Activated T-helper 1 cell treated with anti-CD3 and anti-CD28 coated beads, Interleukin-12 subunit alpha, Interleukin-12 subunit beta, Interleukin-2, Interleukin-4 antibody, amounts not matched to agents 30 ng/mL and 10 ng/mL and 1 ng/mL, durations not matched to agents 14 hours and 24 hours and 36 hours (primary cell): ENCODE measurements at regions of chr3 and their contacts with region 1.

Region 1: DNA sequence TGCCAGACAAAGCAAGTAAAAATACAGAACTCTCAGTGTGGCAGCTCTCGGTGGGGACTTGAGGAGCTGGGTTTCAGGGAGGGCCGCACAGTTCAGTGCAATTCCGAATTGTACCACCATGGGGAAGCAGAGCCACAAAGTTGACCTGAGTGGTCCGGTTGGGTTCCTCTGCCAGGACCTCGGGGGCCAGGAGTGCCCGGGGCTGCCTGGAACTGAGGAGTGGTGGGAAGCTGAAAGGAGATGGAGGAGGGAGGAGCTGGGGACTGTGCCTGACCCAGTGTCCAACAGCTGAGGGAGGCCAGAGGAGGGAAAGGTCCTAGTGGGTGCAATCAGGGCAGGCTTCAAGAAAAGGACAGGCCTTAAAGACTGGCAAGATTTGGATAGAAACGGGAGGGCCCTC is 32.2 kb upstream of the TRH start:
- DNase-seq: peak; percentile 6
- H3K4me3 Mint-ChIP-seq: no peak overlapping the region
- H3K27ac Mint-ChIP-seq: no peak overlapping the region
- H3K4me1 Mint-ChIP-seq: no peaks in the 10 kb centered on the region
- H3K27me3 Mint-ChIP-seq: peaks cover 2% of the 10 kb centered on the region

Region 2: GRCh38 chr3:130014526-130014925 is 72.2 kb after region 1 on chr3:
- intact Hi-C with region 1: loop called (anchors 10 kb)
- DNase-seq: no peak
- H3K4me3 Mint-ChIP-seq: no peak overlapping the region
- H3K27ac Mint-ChIP-seq: no peak overlapping the region
- H3K4me1 Mint-ChIP-seq: no peaks in the 10 kb centered on the region
- H3K27me3 Mint-ChIP-seq: peaks cover 6% of the 10 kb centered on the region

Region 3: DNA sequence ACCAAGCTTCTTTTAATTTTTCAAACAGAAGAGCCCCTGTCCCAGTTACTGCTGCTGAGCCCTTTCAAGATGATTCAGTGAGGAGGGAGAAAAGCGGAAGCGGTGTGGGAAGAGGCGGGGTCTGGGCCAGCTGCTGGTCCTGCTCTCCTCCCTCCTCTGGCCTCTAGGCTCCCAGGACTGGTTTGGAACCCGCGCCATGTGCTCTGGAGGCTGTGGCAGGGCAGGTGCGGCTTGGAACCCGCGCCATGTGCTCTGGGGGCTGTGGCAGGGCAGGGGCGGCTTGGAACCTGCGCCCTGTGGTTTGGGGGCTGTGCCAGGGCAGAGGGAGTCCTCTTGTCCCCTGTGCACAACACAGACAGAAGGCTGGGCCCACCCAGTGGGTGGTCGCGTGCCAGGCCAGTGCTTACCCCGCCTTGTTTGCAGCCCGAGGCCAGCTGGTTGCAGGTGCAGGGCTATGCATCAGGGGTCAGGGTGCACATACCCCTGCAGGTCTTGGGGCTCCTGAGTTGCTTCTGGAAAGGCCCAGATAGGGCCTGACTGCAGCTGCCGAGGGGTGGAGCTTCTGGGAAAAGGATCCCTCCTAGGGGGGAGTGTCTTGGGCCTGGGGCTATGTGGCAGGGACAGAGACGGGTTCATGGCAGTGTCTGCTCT is 151.6 kb after region 1 on chr3:
- intact Hi-C with region 1: loop called (anchors 5 kb)
- DNase-seq: peak; percentile 34
- H3K4me3 Mint-ChIP-seq: peak overlapping the region; percentile 47
- H3K27ac Mint-ChIP-seq: peak overlapping the region; percentile 75
- H3K4me1 Mint-ChIP-seq: peaks cover 25% of the 10 kb centered on the region
- H3K27me3 Mint-ChIP-seq: no peaks in the 10 kb centered on the region